PC-3 (cell line): ENCODE measurements at regions of chr11 and their contacts with region 1.

Region 1: GRCh38 chr11:109939166-109939810 is 153.9 kb upstream of the ZC3H12C start:
- DNase-seq: peak; percentile 94
- ATAC-seq: peak; percentile 68
- H3K4me3 ChIP-seq: no peak overlapping the region
- H3K27ac ChIP-seq: peak overlapping the region; percentile 85
- H3K4me1 ChIP-seq: peaks cover 22% of the 10 kb centered on the region
- H3K27me3 ChIP-seq: no peaks in the 10 kb centered on the region
- CTCF ChIP-seq: peak; percentile 97

Region 2: GRCh38 chr11:108697872-108698473 is 1241.3 kb before region 1 on chr11:
- CTCF ChIA-PET with region 1: no interaction called
- POLR2A ChIA-PET with region 1: no interaction called
- intact Hi-C with region 1: loop called (anchors 1 kb)
- DNase-seq: peak; percentile 79
- ATAC-seq: peak; percentile 82
- H3K4me3 ChIP-seq: no peak overlapping the region
- H3K27ac ChIP-seq: no peak overlapping the region
- H3K4me1 ChIP-seq: peaks cover 13% of the 10 kb centered on the region
- H3K27me3 ChIP-seq: no peaks in the 10 kb centered on the region
- CTCF ChIP-seq: peak; percentile 96

Region 3: DNA sequence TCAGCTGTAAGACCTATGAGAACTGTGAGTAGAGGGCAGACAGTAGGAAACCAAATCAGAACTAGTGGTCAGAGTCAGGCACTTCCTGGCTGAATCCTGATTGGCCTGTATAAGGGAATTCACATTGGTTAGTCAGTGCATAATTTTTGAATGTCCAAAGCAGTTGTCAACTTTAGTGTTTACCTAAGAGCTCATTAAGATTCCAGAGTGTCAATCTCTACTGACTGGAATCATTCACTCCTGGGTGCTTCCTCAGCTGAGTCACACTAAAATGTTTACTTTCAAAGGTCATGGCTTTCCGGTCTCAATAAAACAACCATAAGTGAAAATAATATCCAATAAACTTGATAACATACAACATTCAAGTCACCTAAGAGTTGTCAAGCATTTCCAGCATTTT is 211.2 kb before region 1 on chr11:
- CTCF ChIA-PET with region 1: no interaction called
- POLR2A ChIA-PET with region 1: no interaction called
- intact Hi-C with region 1: loop called (anchors 10 kb)
- DNase-seq: peak; percentile 94
- ATAC-seq: peak; percentile 97
- H3K4me3 ChIP-seq: no peak overlapping the region
- H3K27ac ChIP-seq: peak overlapping the region; percentile 12; the same call in 1 of the 2 replicates
- H3K4me1 ChIP-seq: peaks cover 15% of the 10 kb centered on the region
- H3K27me3 ChIP-seq: no peaks in the 10 kb centered on the region
- CTCF ChIP-seq: no peak

Region 4: DNA sequence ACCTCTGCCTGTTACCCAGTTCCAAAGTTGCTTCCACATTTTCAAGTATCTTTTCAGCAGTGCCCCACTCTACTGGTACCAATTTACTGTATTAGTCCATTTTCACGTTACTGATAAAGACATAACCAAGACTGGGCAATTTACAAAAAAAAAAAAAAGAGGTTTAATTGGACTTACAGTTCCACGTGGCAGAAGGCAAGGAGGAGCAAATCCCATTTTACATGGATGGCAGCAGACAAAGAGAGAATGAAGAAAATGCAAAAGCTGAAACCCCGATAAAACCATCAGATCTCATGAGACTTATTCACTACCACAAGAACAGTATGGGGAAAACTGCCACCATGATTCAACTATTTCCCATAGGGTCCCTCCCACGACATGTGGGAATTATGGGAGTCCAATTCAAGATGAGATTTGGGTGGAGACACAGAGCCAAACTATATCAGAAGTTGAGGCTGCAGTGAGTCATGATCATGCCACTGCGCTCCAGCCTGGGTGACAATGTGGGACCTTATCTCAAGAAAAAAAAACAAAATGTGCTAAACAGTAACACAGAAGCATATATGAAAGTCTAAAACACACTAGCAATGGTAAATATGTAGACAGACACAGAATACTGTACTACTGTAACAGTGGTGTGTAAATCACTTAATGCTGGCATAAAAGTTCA is 36.4 kb before region 1 on chr11:
- CTCF ChIA-PET with region 1: no interaction called
- POLR2A ChIA-PET with region 1: no interaction called
- intact Hi-C with region 1: no loop called
- DNase-seq: no peak
- ATAC-seq: no peak
- H3K4me3 ChIP-seq: no peak overlapping the region
- H3K27ac ChIP-seq: no peak overlapping the region
- H3K4me1 ChIP-seq: no peaks in the 10 kb centered on the region
- H3K27me3 ChIP-seq: peaks cover 23% of the 10 kb centered on the region
- CTCF ChIP-seq: no peak

Region 5: GRCh38 chr11:110362971-110363509 is 423.8 kb after region 1 on chr11:
- CTCF ChIA-PET with region 1: no interaction called
- POLR2A ChIA-PET with region 1: no interaction called
- intact Hi-C with region 1: loop called (anchors 5 kb)
- DNase-seq: peak; percentile 72
- ATAC-seq: peak; percentile 94
- H3K4me3 ChIP-seq: peak overlapping the region; percentile 46
- H3K27ac ChIP-seq: peak overlapping the region; percentile 70
- H3K4me1 ChIP-seq: peaks cover 27% of the 10 kb centered on the region
- H3K27me3 ChIP-seq: no peaks in the 10 kb centered on the region
- CTCF ChIP-seq: no peak